Psoas muscle (tissue), 8 donors: ENCODE measurements at regions of chr15 and their contacts with region 1.

Region 1: GRCh38 chr15:89551502-89551901 is 23.8 kb upstream of the TICRR start:
- DNase-seq: no peak
- ATAC-seq: no peak
- H3K4me3 ChIP-seq: no peak overlapping the region
- H3K27ac ChIP-seq: no peak overlapping the region
- H3K4me1 ChIP-seq: no peaks in the 10 kb centered on the region
- H3K27me3 ChIP-seq: peaks cover 0 to 4% (median 0%) of the 10 kb centered on the region in 3 donors
- CTCF ChIP-seq: no peak

Region 2: DNA sequence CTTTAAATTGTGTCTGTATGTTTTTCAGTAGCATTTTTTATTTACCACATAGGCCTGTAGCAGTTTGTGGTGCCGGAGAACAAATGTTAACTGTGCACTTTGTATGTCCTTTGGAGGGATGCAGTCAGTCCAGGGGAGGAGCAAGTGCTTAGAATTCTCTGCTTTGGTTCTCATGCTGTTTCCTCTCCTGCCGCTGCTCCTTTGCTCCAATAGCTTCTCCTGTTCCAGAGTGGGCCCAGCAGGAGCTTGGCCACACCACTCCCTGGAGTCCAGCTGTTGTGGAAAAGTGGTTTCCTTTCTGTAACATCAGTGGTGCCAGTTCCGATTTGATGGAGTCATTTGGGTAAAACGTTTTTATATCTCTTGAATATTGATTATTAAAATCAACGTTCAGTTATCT is 40.3 kb after region 1 on chr15:
- intact Hi-C with region 1: loop called in 1 of 2 experiments (anchors 5 kb)
- DNase-seq: no peak
- ATAC-seq: no peak
- H3K4me3 ChIP-seq: no peak overlapping the region
- H3K27ac ChIP-seq: no peak overlapping the region
- H3K4me1 ChIP-seq: no peaks in the 10 kb centered on the region
- H3K27me3 ChIP-seq: no peaks in the 10 kb centered on the region
- CTCF ChIP-seq: no peak

Region 3: GRCh38 chr15:90201130-90201949 is 649.8 kb after region 1 on chr15 and contains the start of gene SEMA4B:
- intact Hi-C with region 1: no loop called
- DNase-seq: peak; percentile 74 to 77
- ATAC-seq: peak; percentile 72 to 86 (median 82)
- H3K4me3 ChIP-seq: peak within 1 kb of the TSS; percentile 88
- H3K27ac ChIP-seq: peak within 1 kb of the TSS; percentile 60
- H3K4me1 ChIP-seq: peaks cover 10% of the 10 kb centered on the region
- H3K27me3 ChIP-seq: no peaks in the 10 kb centered on the region
- CTCF ChIP-seq: no peak
- total RNA-seq, gene SEMA4B: 4.4 to 10.8 (median 4.5) TPM